WTC11 (cell line): ENCODE measurements at regions of chr5 and their contacts with region 1.

Region 1: GRCh38 chr5:10987930-10988504 is 227.0 kb upstream of the DAP start:
- DNase-seq: peak; percentile 94
- ATAC-seq: peak; percentile 97
- H3K4me3 Mint-ChIP-seq: peak overlapping the region; percentile 49
- H3K27ac Mint-ChIP-seq: no peak overlapping the region
- H3K4me1 Mint-ChIP-seq: peaks cover 27% of the 10 kb centered on the region
- H3K27me3 Mint-ChIP-seq: no peaks in the 10 kb centered on the region
- CTCF ChIP-seq: peak; percentile 88

Region 2: DNA sequence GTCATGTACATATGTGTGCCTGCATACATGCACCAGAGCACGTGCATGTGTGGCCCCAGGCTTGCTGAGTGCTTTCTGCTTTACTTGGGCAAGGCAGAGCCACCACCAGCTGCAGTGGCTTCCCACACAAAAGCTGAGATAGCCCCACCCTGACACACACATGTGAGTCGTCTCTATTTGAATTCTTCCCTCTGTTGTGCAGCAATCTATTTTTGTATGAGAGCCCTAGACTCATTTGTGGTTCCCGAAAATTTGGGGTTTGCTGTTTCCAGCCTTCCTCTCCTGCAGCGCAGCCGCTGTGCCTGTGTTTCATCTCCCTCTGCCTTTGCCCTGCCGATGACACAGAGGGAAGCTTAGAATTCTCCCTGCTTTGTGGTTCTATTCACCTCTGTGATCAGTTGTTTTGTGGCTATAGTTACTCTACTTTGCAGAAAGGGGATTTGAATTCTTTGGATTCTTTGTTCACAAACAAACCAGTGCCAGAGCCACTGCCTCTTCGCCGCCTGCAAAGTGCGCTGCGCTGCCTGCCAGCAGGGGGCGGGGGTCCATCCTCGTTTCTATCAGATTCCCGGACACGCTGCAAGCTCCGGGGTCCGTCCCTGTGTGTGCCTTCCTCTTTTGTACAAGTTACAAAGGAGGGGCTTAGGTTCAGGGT is 131.2 kb before region 1 on chr5:
- CTCF ChIA-PET with region 1: interaction called, 14 read pairs
- POLR2A ChIA-PET with region 1: no interaction called
- DNase-seq: peak; percentile 87
- ATAC-seq: peak; percentile 89
- H3K4me3 Mint-ChIP-seq: peak overlapping the region; percentile 47
- H3K27ac Mint-ChIP-seq: peak overlapping the region; percentile 72; the same call in 1 of the 2 replicates
- H3K4me1 Mint-ChIP-seq: peaks cover 32% of the 10 kb centered on the region
- H3K27me3 Mint-ChIP-seq: peaks cover 26% of the 10 kb centered on the region
- CTCF ChIP-seq: peak; percentile 74

Region 3: DNA sequence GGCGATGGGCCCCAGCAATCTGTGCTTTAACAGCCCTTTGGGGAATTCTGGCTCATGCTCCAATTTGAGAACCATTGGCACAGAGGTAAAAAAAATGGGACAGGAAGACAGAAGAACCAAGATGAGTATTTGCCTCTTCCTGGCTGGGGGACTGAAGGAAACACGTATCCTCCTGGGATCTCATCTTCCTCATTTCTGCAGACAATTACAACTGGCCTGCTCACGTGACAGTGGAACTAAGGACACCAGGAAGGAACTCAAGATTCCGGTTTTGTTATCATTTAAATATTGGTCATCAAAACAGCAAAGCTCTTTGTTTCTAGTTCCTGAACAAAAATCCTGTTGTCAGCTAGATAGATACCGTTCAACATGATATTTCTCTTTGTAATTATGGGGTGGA is 11.0 kb before region 1 on chr5:
- CTCF ChIA-PET with region 1: interaction called, 11 read pairs
- POLR2A ChIA-PET with region 1: no interaction called
- DNase-seq: no peak
- ATAC-seq: no peak
- H3K4me3 Mint-ChIP-seq: no peak overlapping the region
- H3K27ac Mint-ChIP-seq: no peak overlapping the region
- H3K4me1 Mint-ChIP-seq: no peaks in the 10 kb centered on the region
- H3K27me3 Mint-ChIP-seq: peaks cover 5% of the 10 kb centered on the region; the same call in 1 of the 2 replicates
- CTCF ChIP-seq: no peak

Region 4: DNA sequence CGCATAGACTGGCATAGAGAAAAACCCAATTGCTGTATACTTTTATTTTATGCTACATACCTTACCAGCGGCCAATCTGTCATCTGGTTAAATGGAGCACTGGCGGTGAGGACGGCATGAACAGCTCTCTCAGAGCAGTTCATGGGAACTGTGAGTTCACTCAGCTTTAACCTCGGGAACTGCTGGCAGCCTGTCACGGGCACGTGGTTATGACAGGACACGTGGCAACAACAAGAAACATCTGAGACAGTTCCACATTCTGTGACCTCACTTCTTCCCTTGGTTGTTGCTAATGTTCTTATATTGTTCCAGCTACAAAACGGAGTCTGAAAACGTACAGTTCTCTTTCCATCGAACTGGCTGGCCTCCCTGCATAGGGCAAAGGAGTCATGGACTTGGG is 19.3 kb after region 1 on chr5:
- CTCF ChIA-PET with region 1: interaction called, 31 read pairs
- POLR2A ChIA-PET with region 1: no interaction called
- DNase-seq: no peak
- ATAC-seq: no peak
- H3K4me3 Mint-ChIP-seq: no peak overlapping the region
- H3K27ac Mint-ChIP-seq: no peak overlapping the region
- H3K4me1 Mint-ChIP-seq: peaks cover 5% of the 10 kb centered on the region
- H3K27me3 Mint-ChIP-seq: peaks cover 3% of the 10 kb centered on the region; the same call in 1 of the 2 replicates
- CTCF ChIP-seq: no peak

Region 5: GRCh38 chr5:11048776-11049175 is 60.8 kb after region 1 on chr5:
- CTCF ChIA-PET with region 1: interaction called, 11 read pairs
- POLR2A ChIA-PET with region 1: no interaction called
- DNase-seq: peak; percentile 22
- ATAC-seq: peak; percentile 79
- H3K4me3 Mint-ChIP-seq: no peak overlapping the region
- H3K27ac Mint-ChIP-seq: no peak overlapping the region
- H3K4me1 Mint-ChIP-seq: no peaks in the 10 kb centered on the region
- H3K27me3 Mint-ChIP-seq: no peaks in the 10 kb centered on the region
- CTCF ChIP-seq: no peak

Region 6: DNA sequence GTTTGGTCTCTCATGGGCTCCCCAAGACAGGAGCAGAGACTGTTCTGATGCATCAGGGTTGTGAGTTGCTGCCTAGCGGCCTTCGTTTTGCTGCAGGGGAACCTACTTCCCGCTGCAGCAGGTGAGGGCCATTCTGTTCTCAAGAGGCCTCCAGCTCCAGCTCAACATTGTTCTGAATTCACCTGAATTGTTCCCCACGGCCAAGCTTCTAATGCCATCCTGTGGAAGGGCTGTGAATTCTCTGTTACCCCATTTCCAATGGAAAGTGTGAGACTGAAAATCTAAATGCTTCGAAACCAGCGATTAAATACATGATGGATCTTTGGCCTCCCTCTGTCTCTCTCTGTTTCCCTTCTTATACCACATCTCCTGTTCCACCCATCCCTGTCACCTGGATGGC is 122.1 kb after region 1 on chr5:
- CTCF ChIA-PET with region 1: interaction called, 15 read pairs
- POLR2A ChIA-PET with region 1: no interaction called
- DNase-seq: no peak
- ATAC-seq: peak; percentile 50
- H3K4me3 Mint-ChIP-seq: no peak overlapping the region
- H3K27ac Mint-ChIP-seq: no peak overlapping the region
- H3K4me1 Mint-ChIP-seq: peaks cover 12% of the 10 kb centered on the region
- H3K27me3 Mint-ChIP-seq: no peaks in the 10 kb centered on the region
- CTCF ChIP-seq: no peak